ENCODE measurements at regions of chr16 and their contacts with region 1.

Region 1: GRCh38 chr16:57576429-57576870 is 34.0 kb downstream of the ADGRG5 start:
- DNase-seq: peak; percentile 84
- H3K4me3 ChIP-seq: peak overlapping the region in 1 of 2 experiments; percentile 51; a peak in 1 of 4 replicates
- H3K27ac ChIP-seq: no peak overlapping the region
- H3K4me1 ChIP-seq: peaks cover 0 to 4% of the 10 kb centered on the region in 2 experiments; a peak in 1 of 4 replicates
- H3K27me3 ChIP-seq: no peaks in the 10 kb centered on the region
- CTCF ChIP-seq: peak; percentile 93
- EP300 ChIP-seq: no peak
- RAD21 ChIP-seq: peak; percentile 95

Region 2: DNA sequence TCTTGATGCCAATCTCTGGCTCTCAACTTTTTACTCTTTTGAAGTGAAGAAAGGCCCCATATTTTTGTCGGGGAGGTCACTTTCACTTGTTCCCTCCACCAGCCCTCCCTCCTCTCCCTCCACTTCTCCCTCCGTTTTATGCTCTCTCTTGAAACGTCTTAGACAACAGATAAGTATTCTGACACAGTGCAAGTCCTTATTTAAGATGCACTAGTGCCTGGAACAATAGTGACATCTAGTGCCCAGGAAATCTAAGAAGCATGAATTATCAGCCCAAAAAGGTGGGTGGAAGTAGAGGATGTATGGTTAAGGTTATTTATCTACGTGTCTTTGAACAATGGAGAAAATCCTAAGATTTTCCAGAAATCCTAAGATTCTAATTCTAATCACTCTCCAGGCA is 408.5 kb before region 1 on chr16:
- CTCF ChIA-PET with region 1: no interaction called
- POLR2A ChIA-PET with region 1: no interaction called
- DNase-seq: peak; percentile 46
- H3K4me3 ChIP-seq: no peak overlapping the region; a peak in 1 of 4 replicates
- H3K27ac ChIP-seq: no peak overlapping the region; a peak in 1 of 4 replicates
- H3K4me1 ChIP-seq: peaks cover 0 to 3% of the 10 kb centered on the region in 2 experiments; a peak in 1 of 4 replicates
- H3K27me3 ChIP-seq: no peaks in the 10 kb centered on the region
- CTCF ChIP-seq: peak; percentile 69
- EP300 ChIP-seq: no peak
- RAD21 ChIP-seq: peak; percentile 84

Region 3: DNA sequence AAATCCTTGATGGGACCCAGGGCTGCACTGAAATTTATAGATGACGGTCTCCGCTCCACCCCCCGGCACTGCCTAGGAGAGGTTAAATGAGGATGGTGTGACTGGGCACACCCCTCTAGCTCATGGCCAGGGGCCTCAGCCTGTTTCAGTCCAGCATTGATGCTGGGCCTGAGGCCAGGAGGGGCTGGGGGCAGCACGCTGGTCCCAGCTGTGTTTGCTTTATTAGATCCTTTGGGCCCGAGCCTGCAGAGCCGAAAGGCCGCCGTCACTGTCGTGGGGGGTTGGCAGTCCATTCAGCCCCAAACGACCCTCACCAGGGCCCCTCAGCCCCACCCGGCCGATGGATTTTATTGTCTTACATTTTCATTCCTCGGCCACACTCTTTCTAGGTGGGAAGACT is 79.3 kb before region 1 on chr16:
- CTCF ChIA-PET with region 1: no interaction called
- POLR2A ChIA-PET with region 1: no interaction called
- DNase-seq: no peak
- H3K4me3 ChIP-seq: no peak overlapping the region
- H3K27ac ChIP-seq: no peak overlapping the region
- H3K4me1 ChIP-seq: peaks cover 0 to 12% of the 10 kb centered on the region in 2 experiments; a peak in 1 of 4 replicates
- H3K27me3 ChIP-seq: no peaks in the 10 kb centered on the region
- CTCF ChIP-seq: no peak
- EP300 ChIP-seq: no peak
- RAD21 ChIP-seq: no peak

Region 4: GRCh38 chr16:57551057-57551456 is 25.4 kb before region 1 on chr16:
- CTCF ChIA-PET with region 1: interaction called, 20 read pairs
- POLR2A ChIA-PET with region 1: no interaction called
- DNase-seq: no peak
- H3K4me3 ChIP-seq: no peak overlapping the region
- H3K27ac ChIP-seq: no peak overlapping the region
- H3K4me1 ChIP-seq: no peaks in the 10 kb centered on the region
- H3K27me3 ChIP-seq: no peaks in the 10 kb centered on the region; the same call in 1 of the 2 replicates
- CTCF ChIP-seq: no peak
- EP300 ChIP-seq: no peak
- RAD21 ChIP-seq: no peak

Region 5: DNA sequence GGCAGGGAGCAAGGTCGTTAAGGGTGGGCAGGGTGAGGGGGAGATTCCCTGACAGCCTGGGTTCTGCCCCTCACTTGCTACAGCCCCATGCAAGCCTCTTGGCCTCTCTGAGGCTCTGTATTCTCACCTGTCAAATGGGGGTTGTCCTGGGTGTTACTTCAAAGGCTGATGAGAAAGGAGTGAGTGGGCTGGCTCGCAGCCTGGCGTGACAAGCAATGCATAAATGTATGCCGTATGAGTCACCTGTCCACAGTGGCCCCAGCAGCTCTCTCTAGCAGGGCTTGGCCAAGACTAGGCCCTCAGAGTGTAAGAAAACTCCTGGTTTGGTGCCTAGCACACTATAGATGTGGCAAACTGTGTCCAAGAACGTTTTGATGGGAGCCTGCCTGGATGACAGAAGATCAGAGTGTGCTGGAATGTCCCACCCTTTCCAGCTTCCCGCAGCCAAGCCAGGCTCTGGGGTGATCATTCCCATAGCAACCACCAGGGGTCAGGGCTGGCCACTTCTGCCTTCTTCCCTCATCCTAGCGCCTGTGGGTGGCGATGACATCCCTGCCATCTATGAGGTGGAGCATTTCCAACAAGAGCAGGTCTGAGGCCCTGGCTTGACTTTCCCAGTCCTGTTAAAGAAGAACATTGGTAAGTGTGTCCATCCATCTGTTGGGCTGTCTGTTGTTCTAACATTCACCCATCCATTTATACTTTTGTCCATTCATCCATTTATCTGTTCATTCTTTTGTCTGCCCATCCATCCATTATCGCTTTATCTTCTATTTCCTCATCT is 14.8 kb after region 1 on chr16:
- CTCF ChIA-PET with region 1: interaction called, 116 read pairs
- POLR2A ChIA-PET with region 1: no interaction called
- DNase-seq: peak; percentile 81
- H3K4me3 ChIP-seq: peak overlapping the region in 1 of 2 experiments; percentile 34; a peak in 2 of 4 replicates
- H3K27ac ChIP-seq: peak overlapping the region in 1 of 2 experiments; percentile 55; a peak in 2 of 4 replicates
- H3K4me1 ChIP-seq: peaks cover 0 to 13% of the 10 kb centered on the region in 2 experiments; a peak in 1 of 4 replicates
- H3K27me3 ChIP-seq: no peaks in the 10 kb centered on the region; the same call in 1 of the 2 replicates
- CTCF ChIP-seq: peak; percentile 94
- EP300 ChIP-seq: no peak
- RAD21 ChIP-seq: peak; percentile 85

Region 6: DNA sequence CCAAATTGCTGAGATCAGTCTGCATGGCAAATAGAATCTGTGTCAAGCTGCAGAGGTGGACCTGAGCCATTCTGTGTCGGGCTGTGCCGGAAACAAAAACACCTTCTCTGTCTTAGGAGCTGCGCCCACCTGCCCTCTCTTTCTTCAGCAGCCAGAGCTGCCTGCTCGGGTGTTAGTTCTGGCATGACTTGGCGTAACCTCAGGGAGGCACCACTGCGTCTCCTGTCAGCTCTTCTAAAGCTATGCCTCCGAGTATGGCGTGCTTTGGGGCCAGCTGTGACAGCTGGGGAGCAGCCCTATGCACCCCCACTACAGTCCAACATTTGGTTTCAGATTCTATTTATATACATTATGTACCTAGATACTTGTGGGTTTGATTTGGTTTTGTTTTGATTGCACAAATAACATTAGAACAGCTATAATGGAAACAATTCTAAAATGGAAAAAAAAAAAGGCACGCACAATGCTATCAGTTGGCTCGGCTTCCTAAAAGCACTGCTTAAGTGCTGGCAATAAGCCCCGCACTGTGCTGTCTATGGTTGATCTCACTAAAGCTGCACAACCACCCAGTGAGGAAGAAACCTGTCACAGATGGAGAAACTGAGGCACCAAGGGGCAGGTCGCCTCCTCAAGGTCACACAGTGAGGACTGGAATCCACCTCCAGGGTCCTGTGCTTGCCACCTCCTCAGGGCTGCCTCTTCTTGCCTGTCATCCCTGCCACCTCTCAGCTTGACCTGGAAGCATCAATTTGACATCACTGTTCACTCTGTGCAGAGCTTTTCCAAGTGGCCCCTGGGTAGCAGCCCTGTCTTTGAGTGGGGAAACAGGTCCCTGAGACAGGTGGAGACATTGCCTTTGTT is 33.3 kb after region 1 on chr16:
- CTCF ChIA-PET with region 1: interaction called, 15 read pairs
- POLR2A ChIA-PET with region 1: no interaction called
- DNase-seq: peak; percentile 30
- H3K4me3 ChIP-seq: no peak overlapping the region
- H3K27ac ChIP-seq: no peak overlapping the region
- H3K4me1 ChIP-seq: peaks cover 0 to 21% of the 10 kb centered on the region in 2 experiments; a peak in 2 of 4 replicates
- H3K27me3 ChIP-seq: no peaks in the 10 kb centered on the region
- CTCF ChIP-seq: no peak; the same call in 1 of the 2 replicates
- EP300 ChIP-seq: no peak
- RAD21 ChIP-seq: no peak

Region 7: GRCh38 chr16:57648590-57649442 is 72.4 kb after region 1 on chr16:
- CTCF ChIA-PET with region 1: interaction called, 129 read pairs
- POLR2A ChIA-PET with region 1: no interaction called
- DNase-seq: peak; percentile 93
- H3K4me3 ChIP-seq: peak overlapping the region in 1 of 2 experiments; percentile 52; a peak in 1 of 4 replicates
- H3K27ac ChIP-seq: no peak overlapping the region
- H3K4me1 ChIP-seq: peaks cover 0 to 4% of the 10 kb centered on the region in 2 experiments; a peak in 1 of 4 replicates
- H3K27me3 ChIP-seq: no peaks in the 10 kb centered on the region
- CTCF ChIP-seq: peak; percentile 100
- EP300 ChIP-seq: no peak
- RAD21 ChIP-seq: peak; percentile 96

Region 8: GRCh38 chr16:57757326-57757786 is 180.9 kb after region 1 on chr16:
- CTCF ChIA-PET with region 1: interaction called, 19 read pairs
- POLR2A ChIA-PET with region 1: no interaction called
- DNase-seq: peak; percentile 97
- H3K4me3 ChIP-seq: peak overlapping the region in 1 of 2 experiments; percentile 17; a peak in 1 of 4 replicates
- H3K27ac ChIP-seq: no peak overlapping the region
- H3K4me1 ChIP-seq: no peaks in the 10 kb centered on the region
- H3K27me3 ChIP-seq: no peaks in the 10 kb centered on the region
- CTCF ChIP-seq: peak; percentile 92
- EP300 ChIP-seq: no peak
- RAD21 ChIP-seq: peak; percentile 84